ENCODE measurements at regions of chr16 and their contacts with region 1.

Region 1: DNA sequence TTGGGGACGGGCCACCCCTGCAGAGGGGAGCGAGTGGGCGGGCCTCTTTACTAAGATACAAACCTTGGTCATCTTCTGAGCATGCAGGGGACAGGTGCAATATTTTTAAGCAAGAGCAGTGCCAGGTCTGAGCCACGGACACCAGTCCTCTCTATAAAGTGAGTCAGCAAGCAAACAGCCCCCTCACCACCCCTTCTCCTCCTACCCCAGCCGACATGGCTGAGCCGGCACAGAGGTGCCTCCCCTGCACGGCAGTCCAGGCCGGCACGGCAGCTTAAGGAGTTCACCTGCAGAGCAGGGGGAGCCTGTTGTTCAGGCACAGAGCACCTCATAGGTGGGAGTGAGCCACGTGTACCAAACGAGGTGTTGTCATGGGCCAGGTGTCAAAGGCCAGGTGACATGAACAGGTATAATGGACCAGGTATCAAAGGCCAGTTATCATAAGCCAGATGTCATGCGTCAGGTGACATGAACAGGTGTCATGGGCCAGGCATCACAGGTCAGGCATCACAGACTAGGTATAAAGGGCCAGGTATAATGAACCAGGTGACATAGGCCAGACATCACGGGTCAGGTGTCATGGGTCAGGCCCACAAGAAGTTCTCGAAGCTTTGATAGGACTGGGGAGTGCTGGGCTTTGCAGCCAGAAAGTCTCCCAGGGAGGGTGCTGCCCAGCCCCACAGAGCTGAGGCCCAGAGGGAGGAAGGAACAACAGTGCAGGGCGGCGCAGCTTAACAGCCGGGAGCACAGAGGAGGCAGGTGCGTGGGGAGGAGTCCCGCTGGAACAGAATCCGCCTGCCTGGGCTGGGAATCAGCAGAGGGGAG is 42.6 kb upstream of the ZNF469 start:
- DNase-seq: no peak
- H3K4me3 ChIP-seq: no peak overlapping the region
- H3K27ac ChIP-seq: no peak overlapping the region
- H3K4me1 ChIP-seq: no peaks in the 10 kb centered on the region
- H3K27me3 ChIP-seq: peaks cover 0 to 6% (median 0%) of the 10 kb centered on the region in 3 donors
- CTCF ChIP-seq: no peak
- EP300 ChIP-seq: no peak
- POLR2A ChIP-seq: no peak

Region 2: DNA sequence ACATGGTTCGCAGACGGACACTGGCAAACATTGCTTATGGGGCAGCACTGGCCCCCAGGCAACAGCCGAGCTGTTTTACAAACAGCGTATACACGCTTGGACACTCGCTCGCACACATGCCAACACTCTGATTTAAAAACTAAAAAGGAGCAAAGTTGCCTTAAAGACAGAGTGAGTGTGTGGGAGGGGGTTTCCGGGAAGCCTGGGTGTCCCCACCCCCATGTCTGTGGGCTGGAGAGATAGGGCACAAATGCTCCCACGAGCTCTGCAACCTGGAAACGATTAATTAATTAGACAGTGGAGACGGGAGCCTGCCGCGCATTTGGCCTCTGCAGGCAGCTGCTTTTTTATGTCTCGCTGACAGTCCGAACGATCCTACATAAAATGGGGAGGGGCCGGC is 65.3 kb before region 1 on chr16:
- intact Hi-C with region 1: no loop called
- DNase-seq: peak; percentile 46
- H3K4me3 ChIP-seq: no peak overlapping the region
- H3K27ac ChIP-seq: no peak overlapping the region
- H3K4me1 ChIP-seq: peaks cover 0 to 10% (median 7%) of the 10 kb centered on the region in 4 donors
- H3K27me3 ChIP-seq: no peaks in the 10 kb centered on the region
- CTCF ChIP-seq: no peak
- EP300 ChIP-seq: no peak
- POLR2A ChIP-seq: no peak

Region 3: DNA sequence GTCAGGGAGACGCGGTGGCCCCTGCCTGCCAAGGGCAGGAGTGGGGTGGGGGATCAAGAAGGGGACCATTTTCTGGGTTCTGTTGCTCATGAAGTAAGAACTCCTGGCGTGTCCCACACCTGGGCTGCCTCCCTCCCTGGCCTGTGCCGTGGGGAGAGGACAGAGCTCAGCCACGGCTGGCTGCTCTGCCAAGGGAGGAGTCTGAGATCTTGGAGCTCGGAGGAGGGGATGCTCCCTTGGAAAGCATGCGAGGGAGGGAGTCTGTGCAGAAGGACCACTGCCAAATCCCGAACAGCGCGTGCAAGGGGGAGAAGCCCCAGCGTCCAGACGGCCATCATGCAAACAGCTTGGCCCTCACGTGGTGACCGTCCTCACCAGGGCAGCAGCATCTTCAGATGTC is 21.6 kb before region 1 on chr16:
- intact Hi-C with region 1: loop called (anchors 1 kb)
- DNase-seq: no peak
- H3K4me3 ChIP-seq: no peak overlapping the region
- H3K27ac ChIP-seq: no peak overlapping the region
- H3K4me1 ChIP-seq: no peaks in the 10 kb centered on the region
- H3K27me3 ChIP-seq: no peaks in the 10 kb centered on the region
- CTCF ChIP-seq: no peak
- EP300 ChIP-seq: no peak
- POLR2A ChIP-seq: no peak

Measured in sigmoid colon (tissue), 7 donors.